B cell (primary cell): ENCODE measurements at regions of chr20 and their contacts with region 1.

Region 1: GRCh38 chr20:12012241-12013222 is 94.8 kb downstream of the BTBD3 start:
- DNase-seq: peak; percentile 67
- ATAC-seq: peak; percentile 74
- H3K4me3 ChIP-seq: peak overlapping the region in 1 of 5 experiments; percentile 25
- H3K4me3 Mint-ChIP-seq: no peak overlapping the region
- H3K27ac ChIP-seq: no peak overlapping the region
- H3K27ac Mint-ChIP-seq: no peak overlapping the region
- H3K4me1 ChIP-seq: peaks cover 0 to 4% of the 10 kb centered on the region in 2 donors
- H3K4me1 Mint-ChIP-seq: peaks cover 5% of the 10 kb centered on the region
- H3K27me3 ChIP-seq: no peaks in the 10 kb centered on the region
- H3K27me3 Mint-ChIP-seq: no peaks in the 10 kb centered on the region
- CTCF ChIP-seq: peak; percentile 65

Region 2: GRCh38 chr20:12207875-12208274 is 195.3 kb after region 1 on chr20:
- CTCF ChIA-PET with region 1: interaction called, 3 read pairs
- POLR2A ChIA-PET with region 1: no interaction called
- intact Hi-C with region 1: loop called (anchors 2 kb)
- DNase-seq: peak; percentile 14
- ATAC-seq: no peak
- H3K4me3 ChIP-seq: no peak overlapping the region
- H3K4me3 Mint-ChIP-seq: no peak overlapping the region
- H3K27ac ChIP-seq: no peak overlapping the region
- H3K27ac Mint-ChIP-seq: no peak overlapping the region
- H3K4me1 ChIP-seq: no peaks in the 10 kb centered on the region
- H3K4me1 Mint-ChIP-seq: peaks cover 1% of the 10 kb centered on the region
- H3K27me3 ChIP-seq: no peaks in the 10 kb centered on the region
- H3K27me3 Mint-ChIP-seq: no peaks in the 10 kb centered on the region
- CTCF ChIP-seq: peak; percentile 47